SK-N-SH (cell line): ENCODE measurements at regions of chr6 and their contacts with region 1.

Region 1: GRCh38 chr6:156554160-156554559 is 223.0 kb upstream of the ARID1B start:
- DNase-seq: no peak
- H3K4me3 ChIP-seq: no peak overlapping the region
- H3K27ac ChIP-seq: no peak overlapping the region
- H3K4me1 ChIP-seq: no peaks in the 10 kb centered on the region; a peak in 1 of 4 replicates
- H3K27me3 ChIP-seq: no peaks in the 10 kb centered on the region
- CTCF ChIP-seq: no peak
- EP300 ChIP-seq: no peak
- RAD21 ChIP-seq: no peak

Region 2: GRCh38 chr6:156564127-156564806 is 10.1 kb after region 1 on chr6:
- CTCF ChIA-PET with region 1: interaction called, 13 read pairs
- POLR2A ChIA-PET with region 1: no interaction called
- DNase-seq: peak; percentile 84
- H3K4me3 ChIP-seq: peak overlapping the region in 1 of 2 experiments; percentile 33; a peak in 1 of 4 replicates
- H3K27ac ChIP-seq: no peak overlapping the region
- H3K4me1 ChIP-seq: peaks cover 0 to 6% of the 10 kb centered on the region in 2 experiments; a peak in 1 of 4 replicates
- H3K27me3 ChIP-seq: no peaks in the 10 kb centered on the region
- CTCF ChIP-seq: peak; percentile 76
- EP300 ChIP-seq: no peak
- RAD21 ChIP-seq: peak; percentile 83